ENCODE measurements at regions of chr14 and their contacts with region 1.

Region 1: GRCh38 chr14:91418387-91419043 is 895 bp upstream of the CCDC88C start:
- DNase-seq: peak in 34 of 35 experiments; percentile 53 to 91 (median 74)
- ATAC-seq: peak; percentile 17 to 34 (median 22)
- H3K4me3 ChIP-seq: peak overlapping the region; percentile 17 to 50
- H3K4me3 Mint-ChIP-seq: peak overlapping the region; percentile 75 to 84 (median 81)
- H3K27ac ChIP-seq: peak overlapping the region; percentile 69
- H3K27ac Mint-ChIP-seq: peak overlapping the region; percentile 90 to 96
- H3K4me1 ChIP-seq: peaks cover 16 to 38% of the 10 kb centered on the region in 2 experiments
- H3K4me1 Mint-ChIP-seq: peaks cover 31 to 40% (median 39%) of the 10 kb centered on the region in 3 donors
- H3K27me3 ChIP-seq: no peaks in the 10 kb centered on the region
- H3K27me3 Mint-ChIP-seq: no peaks in the 10 kb centered on the region

Region 2: DNA sequence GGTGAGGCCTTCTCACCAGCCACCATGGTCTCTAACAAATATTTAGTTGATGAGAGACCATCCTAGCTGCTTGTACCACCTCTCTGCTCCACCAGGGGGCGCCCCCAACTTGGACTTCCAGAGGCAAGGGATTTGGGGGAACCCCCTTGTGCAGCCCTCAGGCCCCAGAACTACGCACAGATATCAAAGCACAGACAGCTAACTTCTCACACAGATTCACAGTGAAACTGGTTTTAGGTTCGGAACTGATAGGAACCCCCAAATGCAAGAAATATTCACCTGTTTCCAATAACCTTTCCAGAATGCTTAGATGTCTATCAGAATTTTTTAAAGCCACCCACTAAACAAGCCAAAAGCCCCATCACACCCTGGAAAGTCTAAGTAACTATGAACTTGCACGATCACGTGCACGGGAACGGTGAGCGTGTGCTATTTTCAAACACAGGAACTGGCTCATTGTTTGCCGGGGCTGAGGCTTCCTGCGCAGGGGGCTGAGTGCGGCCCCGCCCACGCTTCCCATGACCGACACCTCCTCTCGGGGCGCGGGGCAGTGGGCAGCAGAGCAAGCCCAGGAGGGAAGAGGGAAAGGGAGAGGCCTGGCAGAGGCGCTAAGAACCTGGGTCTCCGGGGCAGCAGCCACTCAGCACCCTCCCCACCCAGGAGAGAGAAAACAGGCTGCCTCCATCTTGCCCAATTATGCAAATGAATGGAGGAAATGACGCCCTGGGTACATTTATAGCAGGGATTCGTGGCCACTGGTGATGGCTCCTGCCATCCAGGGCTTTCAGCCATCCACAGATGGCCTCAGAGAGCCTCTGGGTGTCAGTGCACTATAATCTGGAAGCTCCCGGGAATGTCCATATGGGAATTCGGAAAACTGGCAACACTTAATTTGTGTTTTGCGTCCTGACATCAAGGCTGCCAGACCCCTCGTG is 94.6 kb before region 1 on chr14:
- CTCF ChIA-PET with region 1: interaction called, 11 to 32 read pairs
- POLR2A ChIA-PET with region 1: interaction called in 1 of 2 experiments, 6 read pairs
- DNase-seq: peak; percentile 86 to 96 (median 94)
- ATAC-seq: peak; percentile 83 to 88 (median 84)
- H3K4me3 ChIP-seq: peak overlapping the region; percentile 28 to 43
- H3K4me3 Mint-ChIP-seq: peak overlapping the region; percentile 78 to 85 (median 80)
- H3K27ac ChIP-seq: peak overlapping the region; percentile 98
- H3K27ac Mint-ChIP-seq: peak overlapping the region; percentile 96 to 98
- H3K4me1 ChIP-seq: peaks cover 51 to 97% of the 10 kb centered on the region in 2 experiments
- H3K4me1 Mint-ChIP-seq: peaks cover 84 to 86% (median 86%) of the 10 kb centered on the region in 3 donors
- H3K27me3 ChIP-seq: no peaks in the 10 kb centered on the region
- H3K27me3 Mint-ChIP-seq: no peaks in the 10 kb centered on the region

Region 3: GRCh38 chr14:91373591-91374254 is 44.8 kb before region 1 on chr14:
- CTCF ChIA-PET with region 1: interaction called, 3 to 5 read pairs
- POLR2A ChIA-PET with region 1: interaction called, 3 to 16 read pairs
- DNase-seq: peak in 19 of 35 experiments; percentile 35 to 77 (median 55)
- ATAC-seq: peak; percentile 54 to 66 (median 60)
- H3K4me3 ChIP-seq: peak overlapping the region; percentile 37 to 66
- H3K4me3 Mint-ChIP-seq: peak overlapping the region; percentile 70 to 84 (median 72)
- H3K27ac ChIP-seq: peak overlapping the region; percentile 87
- H3K27ac Mint-ChIP-seq: peak overlapping the region; percentile 91 to 95
- H3K4me1 ChIP-seq: peaks cover 77 to 100% of the 10 kb centered on the region in 2 experiments
- H3K4me1 Mint-ChIP-seq: peaks cover 97 to 100% (median 98%) of the 10 kb centered on the region in 3 donors
- H3K27me3 ChIP-seq: no peaks in the 10 kb centered on the region
- H3K27me3 Mint-ChIP-seq: no peaks in the 10 kb centered on the region

Region 4: GRCh38 chr14:91396959-91397815 is 21.3 kb before region 1 on chr14:
- CTCF ChIA-PET with region 1: interaction called in 1 of 2 experiments, 10 read pairs
- POLR2A ChIA-PET with region 1: interaction called, 5 to 9 read pairs
- DNase-seq: peak in 34 of 35 experiments; percentile 44 to 75 (median 62)
- ATAC-seq: peak; percentile 69 to 81 (median 77)
- H3K4me3 ChIP-seq: peak overlapping the region; percentile 30 to 49
- H3K4me3 Mint-ChIP-seq: peak overlapping the region; percentile 71 to 98 (median 98)
- H3K27ac ChIP-seq: peak overlapping the region; percentile 85
- H3K27ac Mint-ChIP-seq: peak overlapping the region; percentile 91 to 92
- H3K4me1 ChIP-seq: peaks cover 79 to 95% of the 10 kb centered on the region in 2 experiments
- H3K4me1 Mint-ChIP-seq: peaks cover 96 to 99% (median 96%) of the 10 kb centered on the region in 3 donors
- H3K27me3 ChIP-seq: no peaks in the 10 kb centered on the region
- H3K27me3 Mint-ChIP-seq: no peaks in the 10 kb centered on the region